ENCODE measurements at regions of chr9 and their contacts with region 1.

Region 1: GRCh38 chr9:37324261-37324683 is 98.2 kb upstream of the GRHPR start:
- DNase-seq: peak; percentile 80
- H3K4me3 ChIP-seq: peak overlapping the region; percentile 35
- H3K27ac ChIP-seq: peak overlapping the region; percentile 98
- H3K4me1 ChIP-seq: peaks cover 81% of the 10 kb centered on the region
- CTCF ChIP-seq: no peak

Region 2: GRCh38 chr9:37079370-37080164 is 244.7 kb before region 1 on chr9:
- CTCF ChIA-PET with region 1: interaction called, 5 read pairs
- POLR2A ChIA-PET with region 1: interaction called, 29 read pairs
- intact Hi-C with region 1: loop called (anchors 2 kb)
- DNase-seq: peak; percentile 97
- H3K4me3 ChIP-seq: peak overlapping the region; percentile 90
- H3K27ac ChIP-seq: peak overlapping the region; percentile 70
- H3K4me1 ChIP-seq: peaks cover 63% of the 10 kb centered on the region
- CTCF ChIP-seq: no peak

Region 3: DNA sequence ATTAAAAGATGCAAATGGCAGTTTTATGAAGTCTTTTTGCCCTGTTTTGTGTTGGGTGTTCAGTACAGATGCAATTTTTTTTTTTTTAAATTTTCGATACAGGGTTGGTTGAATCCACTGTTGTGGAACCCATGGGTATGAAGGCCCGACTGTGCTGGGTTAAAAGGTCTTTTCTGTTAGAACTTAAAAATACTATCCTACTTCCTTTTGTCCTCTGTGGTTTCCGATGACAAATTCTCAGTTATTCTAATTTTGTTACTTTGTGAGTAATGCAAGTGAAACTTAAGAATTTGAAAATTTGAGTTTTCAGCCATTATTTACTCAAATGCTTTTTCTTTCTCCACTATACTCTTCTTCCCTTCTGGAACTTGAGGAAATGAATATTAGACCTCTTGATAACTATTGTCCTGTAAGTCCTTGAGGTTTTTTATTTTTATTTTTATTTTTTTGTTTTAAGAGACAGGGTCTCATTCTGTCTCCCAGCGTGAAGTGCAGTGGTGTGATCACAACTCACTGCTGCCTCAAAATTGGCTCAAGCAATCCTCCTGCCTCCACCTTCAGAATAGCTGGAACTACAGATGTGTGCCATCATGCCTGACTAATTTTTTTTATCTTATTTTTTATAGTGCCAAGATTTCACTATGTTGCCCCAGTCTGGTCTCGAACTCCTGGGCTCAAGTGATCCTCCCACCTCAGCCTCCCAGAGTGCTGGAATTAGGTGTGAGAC is 136.4 kb before region 1 on chr9:
- CTCF ChIA-PET with region 1: no interaction called
- POLR2A ChIA-PET with region 1: interaction called, 13 read pairs
- intact Hi-C with region 1: no loop called
- DNase-seq: peak; percentile 76
- H3K4me3 ChIP-seq: peak overlapping the region; percentile 64
- H3K27ac ChIP-seq: peak overlapping the region; percentile 90
- H3K4me1 ChIP-seq: peaks cover 72% of the 10 kb centered on the region
- CTCF ChIP-seq: no peak

Region 4: GRCh38 chr9:37293664-37294524 is 30.4 kb before region 1 on chr9:
- CTCF ChIA-PET with region 1: interaction called, 5 read pairs
- POLR2A ChIA-PET with region 1: interaction called, 290 read pairs
- intact Hi-C with region 1: loop called (anchors 1 kb)
- DNase-seq: peak; percentile 97
- H3K4me3 ChIP-seq: peak overlapping the region; percentile 46
- H3K27ac ChIP-seq: peak overlapping the region; percentile 99
- H3K4me1 ChIP-seq: peaks cover 100% of the 10 kb centered on the region
- CTCF ChIP-seq: no peak

Region 5: DNA sequence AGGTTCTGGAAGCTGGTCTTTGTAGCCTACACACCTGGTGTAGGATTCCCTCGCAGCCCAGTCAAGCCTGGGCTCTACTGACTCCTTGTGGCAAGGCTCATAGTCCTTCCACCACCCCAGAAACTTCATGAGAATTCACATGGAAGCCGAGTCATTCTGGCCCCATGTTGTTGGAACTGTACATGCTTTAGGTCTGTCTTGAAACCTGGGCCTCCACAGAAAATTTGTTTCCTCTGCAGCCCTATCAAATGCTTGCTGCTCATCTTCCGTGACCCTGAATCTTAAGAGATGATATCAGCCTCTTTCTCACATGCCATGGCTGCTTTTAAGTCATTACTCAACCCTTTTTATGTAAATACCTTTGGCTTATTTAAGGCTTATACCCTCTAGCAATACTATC is 15.1 kb before region 1 on chr9:
- CTCF ChIA-PET with region 1: interaction called, 5 read pairs
- POLR2A ChIA-PET with region 1: interaction called, 290 read pairs
- intact Hi-C with region 1: no loop called
- DNase-seq: peak; percentile 54
- H3K4me3 ChIP-seq: no peak overlapping the region
- H3K27ac ChIP-seq: peak overlapping the region; percentile 19
- H3K4me1 ChIP-seq: peaks cover 39% of the 10 kb centered on the region
- CTCF ChIP-seq: peak; percentile 74

Region 6: GRCh38 chr9:37408933-37409710 is 84.8 kb after region 1 on chr9:
- CTCF ChIA-PET with region 1: interaction called, 4 read pairs
- POLR2A ChIA-PET with region 1: interaction called, 19 read pairs
- intact Hi-C with region 1: loop called (anchors 2 kb)
- DNase-seq: peak; percentile 100
- H3K4me3 ChIP-seq: peak overlapping the region; percentile 74
- H3K27ac ChIP-seq: peak overlapping the region; percentile 97
- H3K4me1 ChIP-seq: peaks cover 98% of the 10 kb centered on the region
- CTCF ChIP-seq: 0 out of 2 replicates have a peak, but pooled peaks have one; percentile 29

Measured in OCI-LY7 (cell line).